Activated T-helper 1 cell treated with anti-CD3 and anti-CD28 coated beads, Interleukin-12 subunit alpha, Interleukin-12 subunit beta, Interleukin-2, Interleukin-4 antibody, amounts not matched to agents 30 ng/mL and 10 ng/mL and 1 ng/mL, durations not matched to agents 14 hours and 24 hours and 36 hours (primary cell): ENCODE measurements at regions of chr19 and their contacts with region 1.

Region 1: GRCh38 chr19:41883821-41884733 is 1.1 kb downstream of the ARHGEF1 start:
- DNase-seq: peak; percentile 89
- H3K4me3 Mint-ChIP-seq: peak overlapping the region; percentile 81
- H3K27ac Mint-ChIP-seq: peak overlapping the region; percentile 96
- H3K4me1 Mint-ChIP-seq: peaks cover 56% of the 10 kb centered on the region
- H3K27me3 Mint-ChIP-seq: no peaks in the 10 kb centered on the region

Region 2: DNA sequence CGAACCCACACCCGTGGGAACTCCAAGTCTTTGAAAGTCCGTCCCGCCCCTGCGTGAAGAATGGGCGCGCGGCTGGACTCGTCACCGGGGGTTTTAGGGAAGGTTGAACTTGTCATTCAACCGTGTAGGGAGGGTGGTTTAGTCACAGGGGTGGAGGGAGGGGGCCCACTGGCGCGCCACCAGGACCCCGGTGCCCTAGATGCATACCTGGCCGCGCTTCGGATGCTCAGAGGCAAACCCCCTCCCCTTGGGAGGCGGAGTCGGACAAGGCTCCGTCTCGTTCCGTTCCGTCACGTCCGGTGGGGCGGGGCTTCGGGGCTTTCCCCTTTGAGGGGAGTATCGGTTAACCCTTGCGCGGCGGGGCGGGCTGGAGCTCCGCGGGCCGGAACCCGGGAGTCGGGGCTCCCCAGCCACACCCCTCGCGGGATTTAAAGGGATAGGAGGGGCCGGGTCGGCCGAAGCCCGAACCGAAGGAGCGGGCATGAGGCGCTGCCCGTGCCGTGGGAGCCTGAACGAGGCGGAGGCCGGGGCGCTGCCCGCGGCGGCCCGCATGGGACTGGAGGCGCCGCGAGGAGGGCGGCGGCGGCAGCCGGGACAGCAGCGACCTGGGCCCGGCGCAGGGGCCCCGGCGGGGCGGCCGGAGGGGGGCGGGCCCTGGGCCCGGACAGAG is 1167.3 kb before region 1 on chr19 and contains the starts of genes COQ8B and ITPKC:
- intact Hi-C with region 1: loop called (anchors 5 kb)
- DNase-seq: peak; percentile 100
- H3K4me3 Mint-ChIP-seq: peak within 1 kb of the TSS; percentile 97
- H3K27ac Mint-ChIP-seq: peak within 1 kb of the TSS; percentile 95
- H3K4me1 Mint-ChIP-seq: peaks cover 44% of the 10 kb centered on the region
- H3K27me3 Mint-ChIP-seq: no peaks in the 10 kb centered on the region
- total RNA-seq, gene COQ8B: 38.4 and 41.6 TPM in 2 replicates
- total RNA-seq, gene ITPKC: 8.7 and 9.9 TPM in 2 replicates

Region 3: GRCh38 chr19:41616792-41617621 is 267.1 kb before region 1 on chr19:
- intact Hi-C with region 1: no loop called
- DNase-seq: no peak
- H3K4me3 Mint-ChIP-seq: no peak overlapping the region
- H3K27ac Mint-ChIP-seq: no peak overlapping the region
- H3K4me1 Mint-ChIP-seq: no peaks in the 10 kb centered on the region
- H3K27me3 Mint-ChIP-seq: peaks cover 15% of the 10 kb centered on the region

Region 4: DNA sequence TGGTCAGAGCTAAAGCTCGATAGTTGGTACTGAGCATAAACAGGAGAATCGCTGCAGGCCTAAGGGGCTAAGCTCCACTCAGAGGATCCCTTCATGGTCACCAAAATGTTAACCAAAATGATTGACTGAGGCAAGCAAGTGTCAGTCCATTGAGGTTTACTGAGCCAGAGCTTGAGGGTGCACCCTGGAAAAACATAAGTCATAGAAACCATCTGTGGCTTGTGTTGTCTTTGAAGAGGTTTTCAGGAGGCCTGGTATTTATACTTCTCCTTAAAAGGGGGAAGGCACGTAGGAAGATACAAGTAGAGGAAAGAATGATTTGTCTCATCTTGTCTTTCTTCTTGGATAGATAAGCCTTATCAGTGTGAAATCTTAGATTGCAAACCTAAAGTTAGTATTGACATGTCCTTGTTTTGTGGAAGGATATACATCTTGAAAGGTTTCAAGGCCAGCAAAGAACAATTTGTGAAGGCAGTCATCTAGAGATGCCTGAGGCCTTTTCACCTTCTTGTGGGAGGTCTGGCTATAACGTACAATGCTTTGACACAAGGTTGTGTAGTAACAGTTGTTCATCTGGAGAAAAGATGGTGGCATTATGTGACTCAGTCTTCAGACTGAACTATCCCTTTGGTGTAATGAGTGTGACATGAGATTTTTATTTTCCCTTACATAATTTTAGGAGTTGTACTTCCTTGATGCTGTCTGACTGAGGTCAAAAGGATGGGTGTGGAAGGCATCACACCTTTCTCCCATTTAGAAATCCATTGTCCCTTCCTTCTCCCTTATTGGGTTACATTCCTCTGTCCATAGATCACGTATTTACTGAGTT is 143.4 kb before region 1 on chr19:
- intact Hi-C with region 1: loop called (anchors 2 kb)
- DNase-seq: no peak
- H3K4me3 Mint-ChIP-seq: peak overlapping the region; percentile 3
- H3K27ac Mint-ChIP-seq: peak overlapping the region; percentile 66
- H3K4me1 Mint-ChIP-seq: peaks cover 20% of the 10 kb centered on the region
- H3K27me3 Mint-ChIP-seq: peaks cover 45% of the 10 kb centered on the region

Region 5: DNA sequence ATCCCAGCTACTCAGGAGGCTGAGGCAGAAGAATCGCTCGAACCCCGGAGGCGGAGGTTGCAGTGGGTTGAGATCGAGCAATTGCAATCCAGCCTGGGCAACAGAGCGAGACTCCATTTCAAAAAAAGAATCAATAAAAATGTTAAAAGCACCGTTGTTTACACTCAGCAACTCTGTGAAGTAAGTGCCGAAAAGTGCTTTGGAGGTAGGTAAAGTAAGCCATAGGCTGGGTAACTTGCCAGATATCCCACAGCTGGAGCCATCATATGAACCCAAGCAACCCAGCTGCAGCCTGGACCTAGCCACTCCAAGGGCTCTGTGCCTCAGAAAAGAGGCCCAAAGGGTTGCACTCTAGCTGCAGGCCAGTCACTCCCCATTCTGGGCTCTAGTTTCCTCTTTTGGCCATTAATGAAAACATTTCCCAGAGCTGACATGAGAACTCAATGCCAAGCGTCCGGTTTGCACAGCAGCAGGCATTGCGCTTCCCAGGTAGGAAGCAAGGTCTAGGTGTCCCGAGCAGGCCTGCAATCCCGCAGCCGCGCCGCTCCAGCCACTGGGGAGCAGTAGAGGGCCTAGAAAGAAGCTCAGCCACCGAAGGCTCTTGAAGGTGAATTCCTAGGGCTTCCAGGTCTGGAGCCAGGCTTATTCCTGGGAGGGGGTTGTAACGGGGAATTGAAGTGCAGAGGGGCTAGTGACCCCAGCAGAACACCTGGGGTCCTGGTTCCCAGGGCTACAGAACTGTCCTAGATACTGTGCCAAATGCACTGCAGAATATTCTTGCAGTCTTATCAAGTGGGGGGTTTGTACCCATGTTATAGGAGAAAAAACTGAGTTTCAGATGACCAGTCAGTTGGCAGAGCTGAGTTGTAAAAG is 11.1 kb before region 1 on chr19:
- intact Hi-C with region 1: loop called (anchors 1 kb)
- DNase-seq: peak; percentile 49
- H3K4me3 Mint-ChIP-seq: peak overlapping the region; percentile 29
- H3K27ac Mint-ChIP-seq: peak overlapping the region; percentile 88
- H3K4me1 Mint-ChIP-seq: peaks cover 84% of the 10 kb centered on the region
- H3K27me3 Mint-ChIP-seq: no peaks in the 10 kb centered on the region

Region 6: GRCh38 chr19:41945135-41945766 is 61.2 kb after region 1 on chr19:
- intact Hi-C with region 1: loop called (anchors 1 kb)
- DNase-seq: peak; percentile 70
- H3K4me3 Mint-ChIP-seq: peak overlapping the region; percentile 71
- H3K27ac Mint-ChIP-seq: peak overlapping the region; percentile 94
- H3K4me1 Mint-ChIP-seq: peaks cover 54% of the 10 kb centered on the region
- H3K27me3 Mint-ChIP-seq: peaks cover 7% of the 10 kb centered on the region

Region 7: DNA sequence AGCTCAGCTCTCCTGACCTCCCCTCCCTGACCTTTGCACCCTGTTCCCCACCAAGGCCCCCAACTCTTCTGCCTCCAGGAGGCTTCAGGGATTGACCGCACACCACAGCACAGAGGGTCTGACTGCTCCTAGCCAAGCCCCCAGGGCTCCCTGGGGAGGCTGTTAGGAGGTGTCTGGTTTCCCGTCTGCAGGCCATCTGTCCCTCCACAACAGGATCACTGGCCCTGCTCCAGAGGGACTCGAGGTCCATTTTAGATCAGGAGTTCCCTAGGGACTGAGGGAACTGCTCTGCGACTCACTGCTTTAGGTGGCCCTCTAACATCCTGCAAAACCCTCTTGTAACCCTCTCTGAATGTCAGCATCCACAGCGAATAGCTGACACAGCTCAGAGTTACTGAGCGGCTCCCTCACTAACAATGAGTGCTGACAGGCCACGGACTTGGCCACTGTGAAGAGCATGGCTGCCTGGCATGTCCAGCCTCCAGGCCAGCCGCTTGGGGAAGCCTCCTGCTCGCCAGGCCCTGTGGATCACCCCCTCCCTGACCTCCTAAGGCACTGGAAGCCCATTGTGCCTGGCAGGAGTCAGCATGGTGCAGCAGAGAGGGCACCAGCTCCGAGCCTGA is 168.3 kb after region 1 on chr19:
- intact Hi-C with region 1: no loop called
- DNase-seq: no peak
- H3K4me3 Mint-ChIP-seq: no peak overlapping the region
- H3K27ac Mint-ChIP-seq: no peak overlapping the region
- H3K4me1 Mint-ChIP-seq: peaks cover 17% of the 10 kb centered on the region
- H3K27me3 Mint-ChIP-seq: peaks cover 4% of the 10 kb centered on the region

Region 8: DNA sequence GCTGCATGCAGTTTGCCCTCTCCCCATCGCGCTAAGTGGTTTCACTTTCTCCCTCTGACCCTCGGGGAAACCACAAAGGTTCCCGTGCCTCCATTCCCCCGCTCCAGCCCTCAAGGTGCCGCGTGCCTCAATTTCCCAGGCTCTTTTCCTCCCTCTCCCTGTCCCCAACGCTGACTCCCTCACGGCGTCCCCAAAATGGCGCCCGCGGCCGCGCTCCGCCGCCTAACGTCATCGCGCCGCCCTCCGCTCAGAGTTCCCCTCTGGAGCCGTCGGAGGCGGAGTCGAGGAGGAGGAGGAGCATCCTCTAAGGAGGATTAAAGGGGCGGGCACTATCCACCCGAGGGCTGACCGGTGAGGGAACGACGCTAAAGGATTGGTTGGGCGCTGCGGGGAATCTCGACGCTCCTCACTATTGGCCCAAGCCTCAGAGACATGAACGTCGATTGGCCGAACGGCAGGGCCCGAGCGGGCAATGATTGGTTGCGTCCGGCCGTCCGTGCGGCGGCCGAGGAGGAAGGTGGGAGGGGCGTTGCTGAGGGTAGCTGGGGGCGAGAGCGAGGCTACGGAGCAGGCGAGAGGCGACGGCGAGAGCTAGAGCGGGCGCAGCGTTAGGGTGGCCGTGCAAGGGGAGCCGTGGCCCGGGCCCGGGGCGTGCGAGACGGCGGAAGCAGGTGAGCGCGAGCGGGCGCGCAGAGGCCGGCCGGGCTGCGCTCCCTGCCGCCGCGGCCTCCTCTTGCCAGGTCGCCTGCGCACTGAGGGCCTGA is 191.7 kb after region 1 on chr19 and contains the start of gene ZNF574:
- intact Hi-C with region 1: loop called (anchors 1 kb)
- DNase-seq: peak; percentile 97
- H3K4me3 Mint-ChIP-seq: peak within 1 kb of the TSS; percentile 97
- H3K27ac Mint-ChIP-seq: peak within 1 kb of the TSS; percentile 99
- H3K4me1 Mint-ChIP-seq: peaks cover 37% of the 10 kb centered on the region
- H3K27me3 Mint-ChIP-seq: peaks cover 1% of the 10 kb centered on the region
- total RNA-seq, gene ZNF574: 17.5 and 17.8 TPM in 2 replicates